ENCODE measurements at regions of chrX and their contacts with region 1.

Region 1: GRCh38 chrX:39730662-39731397 is 366.9 kb downstream of the BCOR start:
- DNase-seq: peak; percentile 67
- ATAC-seq: peak; percentile 83
- H3K4me3 Mint-ChIP-seq: no peak overlapping the region
- H3K27ac Mint-ChIP-seq: no peak overlapping the region
- H3K4me1 Mint-ChIP-seq: peaks cover 14% of the 10 kb centered on the region
- H3K27me3 Mint-ChIP-seq: no peaks in the 10 kb centered on the region

Region 2: DNA sequence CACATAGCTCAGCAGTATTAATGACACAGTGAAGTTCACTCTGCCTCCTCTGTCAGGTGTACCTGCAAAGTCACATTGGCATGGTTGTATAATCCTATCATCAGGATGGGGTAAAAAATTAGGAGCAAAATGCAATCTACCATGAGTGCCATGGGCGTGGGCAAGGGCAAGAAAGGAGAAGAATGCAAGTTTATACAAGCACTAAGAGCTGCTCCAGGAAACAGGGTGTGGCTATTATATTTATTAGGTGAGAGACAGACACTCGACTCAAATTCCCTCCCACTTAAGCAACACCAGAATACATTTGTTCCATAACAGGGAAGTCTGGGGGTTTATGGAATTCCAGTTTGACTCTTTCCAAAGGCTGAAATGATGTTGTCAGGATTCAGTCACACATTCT is 11.9 kb before region 1 on chrX:
- CTCF ChIA-PET with region 1: no interaction called
- POLR2A ChIA-PET with region 1: no interaction called
- DNase-seq: no peak
- ATAC-seq: no peak
- H3K4me3 Mint-ChIP-seq: no peak overlapping the region
- H3K27ac Mint-ChIP-seq: no peak overlapping the region
- H3K4me1 Mint-ChIP-seq: no peaks in the 10 kb centered on the region
- H3K27me3 Mint-ChIP-seq: peaks cover 5% of the 10 kb centered on the region

Region 3: DNA sequence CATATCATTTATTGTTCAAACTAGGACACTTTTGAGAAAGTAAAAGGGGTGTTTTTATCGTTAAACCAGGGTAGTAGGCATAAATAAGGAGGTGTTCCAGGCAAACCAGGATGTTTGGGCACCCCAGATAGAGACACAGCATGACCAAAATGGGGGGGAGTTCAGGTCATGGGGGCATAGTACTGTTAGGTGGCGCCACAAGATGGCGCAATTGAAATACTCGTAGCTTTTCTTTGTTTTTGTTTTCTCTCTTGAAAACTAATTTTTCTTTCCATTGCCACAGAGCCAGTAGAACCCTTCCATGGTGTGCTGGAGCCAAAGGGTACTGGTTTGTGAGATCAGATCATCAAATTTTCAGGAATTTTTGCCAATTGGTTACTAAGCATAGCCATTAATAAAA is 83.6 kb after region 1 on chrX:
- CTCF ChIA-PET with region 1: interaction called, 12 read pairs
- POLR2A ChIA-PET with region 1: no interaction called
- DNase-seq: peak; percentile 64
- ATAC-seq: peak; percentile 69
- H3K4me3 Mint-ChIP-seq: no peak overlapping the region
- H3K27ac Mint-ChIP-seq: no peak overlapping the region
- H3K4me1 Mint-ChIP-seq: peaks cover 27% of the 10 kb centered on the region
- H3K27me3 Mint-ChIP-seq: peaks cover 3% of the 10 kb centered on the region

Measured in activated CD8-positive, alpha-beta T cell treated with anti-CD3 and anti-CD28 coated beads, Interleukin-2, amount 10 ng/mL, durations not matched to agents 7 days and 5 days (primary cell).